Activated CD8-positive, alpha-beta T cell treated with anti-CD3 and anti-CD28 coated beads, Interleukin-2, amount 10 ng/mL, durations not matched to agents 7 days and 5 days (primary cell): ENCODE measurements at regions of chr1 and their contacts with region 1.

Region 1: DNA sequence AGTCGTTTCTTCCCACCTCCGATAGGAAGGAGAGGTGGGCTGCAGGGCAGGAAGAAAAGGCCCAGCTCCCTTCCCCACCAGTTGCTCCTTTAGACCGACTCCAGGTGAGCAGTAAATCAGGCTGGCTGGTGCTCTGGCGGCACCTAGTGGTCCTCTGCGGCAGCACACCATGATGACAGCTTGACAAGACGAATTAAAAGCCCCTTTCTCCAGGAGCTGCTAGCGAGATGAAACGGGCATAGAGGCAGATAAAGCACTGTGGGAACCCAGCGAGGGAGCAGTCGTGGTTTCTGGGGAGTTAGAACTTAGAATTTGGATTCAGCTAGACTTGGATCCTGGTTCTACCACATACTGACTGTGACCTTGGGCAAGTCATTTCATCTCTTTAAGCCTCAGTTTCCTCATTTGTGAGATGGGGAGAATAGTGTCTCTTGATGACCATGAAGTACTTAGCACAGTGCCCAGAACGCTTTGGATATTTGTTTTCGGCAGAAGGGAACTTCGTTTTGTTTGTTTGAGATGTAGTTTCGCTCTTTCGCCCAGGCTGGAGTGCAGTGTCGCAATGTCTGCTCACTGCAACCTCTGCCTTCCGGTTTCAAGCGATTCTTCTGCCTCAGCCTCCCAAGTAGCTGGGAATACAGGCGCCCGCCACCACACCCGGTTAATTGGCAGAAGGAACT is 21.8 kb upstream of the COL9A2 start:
- DNase-seq: peak; percentile 92
- ATAC-seq: peak; percentile 91
- H3K4me3 Mint-ChIP-seq: peak overlapping the region; percentile 32
- H3K27ac Mint-ChIP-seq: peak overlapping the region; percentile 59
- H3K4me1 Mint-ChIP-seq: peaks cover 45% of the 10 kb centered on the region
- H3K27me3 Mint-ChIP-seq: no peaks in the 10 kb centered on the region

Region 2: GRCh38 chr1:40078512-40079333 is 260.2 kb before region 1 on chr1:
- CTCF ChIA-PET with region 1: interaction called, 49 read pairs
- POLR2A ChIA-PET with region 1: no interaction called
- DNase-seq: peak; percentile 75
- ATAC-seq: peak; percentile 83
- H3K4me3 Mint-ChIP-seq: no peak overlapping the region
- H3K27ac Mint-ChIP-seq: no peak overlapping the region
- H3K4me1 Mint-ChIP-seq: peaks cover 2% of the 10 kb centered on the region
- H3K27me3 Mint-ChIP-seq: no peaks in the 10 kb centered on the region

Region 3: GRCh38 chr1:40153073-40153770 is 185.7 kb before region 1 on chr1:
- CTCF ChIA-PET with region 1: interaction called, 262 read pairs
- POLR2A ChIA-PET with region 1: interaction called, 13 read pairs
- DNase-seq: peak; percentile 63
- ATAC-seq: peak; percentile 72
- H3K4me3 Mint-ChIP-seq: no peak overlapping the region
- H3K27ac Mint-ChIP-seq: no peak overlapping the region
- H3K4me1 Mint-ChIP-seq: peaks cover 9% of the 10 kb centered on the region
- H3K27me3 Mint-ChIP-seq: peaks cover 11% of the 10 kb centered on the region

Region 4: GRCh38 chr1:40241362-40241761 is 97.5 kb before region 1 on chr1:
- CTCF ChIA-PET with region 1: interaction called, 15 read pairs
- POLR2A ChIA-PET with region 1: interaction called, 3 read pairs
- DNase-seq: no peak
- ATAC-seq: no peak
- H3K4me3 Mint-ChIP-seq: no peak overlapping the region
- H3K27ac Mint-ChIP-seq: peak overlapping the region; percentile 76
- H3K4me1 Mint-ChIP-seq: peaks cover 36% of the 10 kb centered on the region
- H3K27me3 Mint-ChIP-seq: no peaks in the 10 kb centered on the region

Region 5: GRCh38 chr1:40305457-40305856 is 33.4 kb before region 1 on chr1:
- CTCF ChIA-PET with region 1: no interaction called
- POLR2A ChIA-PET with region 1: no interaction called
- DNase-seq: no peak
- ATAC-seq: no peak
- H3K4me3 Mint-ChIP-seq: no peak overlapping the region
- H3K27ac Mint-ChIP-seq: no peak overlapping the region
- H3K4me1 Mint-ChIP-seq: no peaks in the 10 kb centered on the region
- H3K27me3 Mint-ChIP-seq: no peaks in the 10 kb centered on the region

Region 6: DNA sequence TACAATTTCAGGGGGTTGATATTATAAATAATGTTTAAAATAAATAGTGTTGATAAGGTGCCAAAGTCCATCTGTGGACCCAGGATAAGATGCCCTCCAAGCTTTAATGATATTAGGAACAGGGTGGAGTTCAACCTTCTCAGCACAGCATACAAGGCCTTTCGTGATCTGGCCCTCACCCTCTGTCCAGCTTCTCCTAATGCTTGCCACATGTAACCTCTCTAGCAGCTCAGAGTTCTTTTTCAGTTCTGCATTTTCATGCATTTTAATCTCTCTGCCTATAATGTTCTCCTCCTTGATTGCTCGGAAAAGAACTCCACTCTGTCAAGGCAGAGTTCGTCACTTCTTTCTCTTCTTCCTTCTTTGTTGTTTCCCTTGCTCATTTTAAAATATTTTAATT is 13.2 kb after region 1 on chr1:
- CTCF ChIA-PET with region 1: interaction called, 22 read pairs
- POLR2A ChIA-PET with region 1: no interaction called
- DNase-seq: no peak
- ATAC-seq: no peak
- H3K4me3 Mint-ChIP-seq: no peak overlapping the region
- H3K27ac Mint-ChIP-seq: no peak overlapping the region
- H3K4me1 Mint-ChIP-seq: no peaks in the 10 kb centered on the region
- H3K27me3 Mint-ChIP-seq: no peaks in the 10 kb centered on the region

Region 7: GRCh38 chr1:40385437-40386358 is 46.8 kb after region 1 on chr1:
- CTCF ChIA-PET with region 1: interaction called, 24 read pairs
- POLR2A ChIA-PET with region 1: interaction called, 10 read pairs
- DNase-seq: peak; percentile 84
- ATAC-seq: peak; percentile 68
- H3K4me3 Mint-ChIP-seq: peak overlapping the region; percentile 79
- H3K27ac Mint-ChIP-seq: peak overlapping the region; percentile 99
- H3K4me1 Mint-ChIP-seq: peaks cover 94% of the 10 kb centered on the region
- H3K27me3 Mint-ChIP-seq: no peaks in the 10 kb centered on the region